Body of pancreas (tissue), 4 donors: ENCODE measurements at regions of chr14 and their contacts with region 1.

Region 1: DNA sequence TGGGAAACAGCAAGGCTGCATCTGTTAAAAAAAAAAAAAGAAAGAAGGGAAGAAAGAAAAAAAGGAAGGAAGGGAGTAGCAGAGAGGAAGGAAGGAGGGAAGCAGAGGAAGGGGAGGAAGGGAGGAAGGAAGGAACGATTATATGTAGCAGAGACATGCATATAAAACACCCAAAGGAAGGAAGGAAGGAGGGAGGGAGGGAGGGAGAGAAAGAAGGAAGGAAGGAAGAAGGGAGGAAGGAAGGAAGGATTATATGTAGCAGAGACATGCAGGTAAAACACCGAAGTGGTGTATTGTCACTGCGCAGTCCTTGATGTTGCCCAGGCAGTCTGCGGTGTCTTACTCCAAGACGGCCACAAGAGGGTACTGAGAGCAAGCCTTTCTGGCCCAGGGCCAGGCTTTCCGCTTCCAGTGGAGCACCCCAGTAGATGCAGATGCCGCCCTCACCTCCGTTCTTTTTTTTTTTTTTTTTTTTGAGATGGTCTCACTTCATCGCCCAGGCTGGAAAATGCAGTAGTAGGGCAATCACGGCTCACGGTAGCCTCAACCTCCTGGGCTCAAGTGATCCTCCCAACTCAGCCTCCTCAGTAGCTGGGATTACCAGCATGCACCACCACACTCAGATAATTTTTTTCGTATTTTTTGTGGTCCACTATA is 5.8 kb upstream of the LBHD2 start:
- DNase-seq: peak; percentile 79 to 88 (median 84)
- ATAC-seq: peak; percentile 39
- H3K4me3 ChIP-seq: no peak overlapping the region
- H3K27ac ChIP-seq: no peak overlapping the region
- H3K4me1 ChIP-seq: peaks cover 28% of the 10 kb centered on the region
- H3K27me3 ChIP-seq: no peaks in the 10 kb centered on the region
- CTCF ChIP-seq: peak; percentile 56 to 90 (median 77)
- POLR2A ChIP-seq: no peak

Region 2: GRCh38 chr14:103292426-103293374 is 214.5 kb after region 1 on chr14:
- intact Hi-C with region 1: loop called (anchors 10 kb)
- DNase-seq: peak; percentile 75 to 85 (median 80)
- ATAC-seq: peak; percentile 85
- H3K4me3 ChIP-seq: no peak overlapping the region
- H3K27ac ChIP-seq: no peak overlapping the region
- H3K4me1 ChIP-seq: no peaks in the 10 kb centered on the region
- H3K27me3 ChIP-seq: no peaks in the 10 kb centered on the region
- CTCF ChIP-seq: peak; percentile 82 to 92 (median 88)
- POLR2A ChIP-seq: no peak

Region 3: DNA sequence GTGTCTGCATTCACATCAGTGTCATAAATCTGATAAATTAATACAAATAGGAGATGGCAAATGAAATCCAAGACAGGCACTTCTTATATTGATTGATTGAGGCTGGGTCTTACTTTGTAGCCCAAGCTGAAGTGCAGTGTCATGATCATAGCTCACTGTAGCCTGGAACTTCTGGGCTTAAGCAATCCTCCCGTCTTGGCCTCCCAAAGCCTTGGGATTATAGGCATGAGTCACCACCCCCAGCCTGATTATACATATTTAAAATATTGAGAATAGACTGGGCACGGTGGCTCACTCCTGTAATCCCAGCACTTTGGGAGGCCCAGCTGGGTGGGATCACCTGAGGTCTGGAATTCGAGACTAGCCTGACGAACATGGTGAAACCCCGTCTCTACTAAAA is 358.3 kb after region 1 on chr14:
- intact Hi-C with region 1: no loop called
- DNase-seq: no peak
- ATAC-seq: no peak
- H3K4me3 ChIP-seq: no peak overlapping the region
- H3K27ac ChIP-seq: no peak overlapping the region
- H3K4me1 ChIP-seq: no peaks in the 10 kb centered on the region
- H3K27me3 ChIP-seq: no peaks in the 10 kb centered on the region
- CTCF ChIP-seq: no peak
- POLR2A ChIP-seq: no peak